Activated CD4-positive, alpha-beta T cell treated with anti-CD3 and anti-CD28 coated beads for 36 hours (primary cell): ENCODE measurements at regions of chr2 and their contacts with region 1.

Region 1: GRCh38 chr2:11129598-11130449 is 25.4 kb upstream of the SLC66A3 start:
- DNase-seq: peak; percentile 90
- ATAC-seq: peak; percentile 92
- H3K4me3 Mint-ChIP-seq: peak overlapping the region; percentile 52
- H3K27ac Mint-ChIP-seq: peak overlapping the region; percentile 51
- H3K4me1 Mint-ChIP-seq: peaks cover 28% of the 10 kb centered on the region
- H3K27me3 Mint-ChIP-seq: no peaks in the 10 kb centered on the region

Region 2: GRCh38 chr2:10668402-10669012 is 461.3 kb before region 1 on chr2:
- CTCF ChIA-PET with region 1: no interaction called
- POLR2A ChIA-PET with region 1: no interaction called
- intact Hi-C with region 1: no loop called
- DNase-seq: peak; percentile 23
- ATAC-seq: peak; percentile 70
- H3K4me3 Mint-ChIP-seq: no peak overlapping the region
- H3K27ac Mint-ChIP-seq: no peak overlapping the region
- H3K4me1 Mint-ChIP-seq: no peaks in the 10 kb centered on the region
- H3K27me3 Mint-ChIP-seq: no peaks in the 10 kb centered on the region

Region 3: GRCh38 chr2:10812362-10813162 is 317.3 kb before region 1 on chr2 and contains the start of gene PDIA6:
- CTCF ChIA-PET with region 1: interaction called, 4 read pairs
- POLR2A ChIA-PET with region 1: interaction called, 4 read pairs
- intact Hi-C with region 1: loop called in 1 of 2 experiments (anchors 1 kb)
- DNase-seq: peak; percentile 97
- ATAC-seq: peak; percentile 94
- H3K4me3 Mint-ChIP-seq: peak within 1 kb of the TSS; percentile 89
- H3K27ac Mint-ChIP-seq: peak within 1 kb of the TSS; percentile 90
- H3K4me1 Mint-ChIP-seq: peaks cover 34% of the 10 kb centered on the region
- H3K27me3 Mint-ChIP-seq: peaks cover 1% of the 10 kb centered on the region
- total RNA-seq, gene PDIA6: 123 to 157 TPM

Region 4: GRCh38 chr2:11145350-11145749 is 15.5 kb after region 1 on chr2:
- CTCF ChIA-PET with region 1: interaction called, 12 read pairs
- POLR2A ChIA-PET with region 1: no interaction called
- intact Hi-C with region 1: no loop called
- DNase-seq: no peak
- ATAC-seq: no peak
- H3K4me3 Mint-ChIP-seq: no peak overlapping the region
- H3K27ac Mint-ChIP-seq: no peak overlapping the region
- H3K4me1 Mint-ChIP-seq: no peaks in the 10 kb centered on the region
- H3K27me3 Mint-ChIP-seq: peaks cover 2% of the 10 kb centered on the region

Region 5: GRCh38 chr2:11344342-11344955 is 214.6 kb after region 1 on chr2 and contains the start of gene ROCK2:
- CTCF ChIA-PET with region 1: interaction called, 11 read pairs
- POLR2A ChIA-PET with region 1: no interaction called
- intact Hi-C with region 1: loop called in 1 of 2 experiments (anchors 2 kb)
- DNase-seq: peak; percentile 81
- ATAC-seq: peak; percentile 68
- H3K4me3 Mint-ChIP-seq: peak within 1 kb of the TSS; percentile 97
- H3K27ac Mint-ChIP-seq: peak within 1 kb of the TSS; percentile 89
- H3K4me1 Mint-ChIP-seq: peaks cover 31% of the 10 kb centered on the region
- H3K27me3 Mint-ChIP-seq: no peaks in the 10 kb centered on the region
- total RNA-seq, gene ROCK2: 14.4 to 16.7 TPM

Region 6: GRCh38 chr2:11446733-11447248 is 317.0 kb after region 1 on chr2:
- CTCF ChIA-PET with region 1: interaction called, 28 read pairs
- POLR2A ChIA-PET with region 1: interaction called, 3 read pairs
- intact Hi-C with region 1: loop called (anchors 1 kb)
- DNase-seq: peak; percentile 62
- ATAC-seq: peak; percentile 66
- H3K4me3 Mint-ChIP-seq: no peak overlapping the region
- H3K27ac Mint-ChIP-seq: no peak overlapping the region
- H3K4me1 Mint-ChIP-seq: no peaks in the 10 kb centered on the region
- H3K27me3 Mint-ChIP-seq: no peaks in the 10 kb centered on the region

Region 7: DNA sequence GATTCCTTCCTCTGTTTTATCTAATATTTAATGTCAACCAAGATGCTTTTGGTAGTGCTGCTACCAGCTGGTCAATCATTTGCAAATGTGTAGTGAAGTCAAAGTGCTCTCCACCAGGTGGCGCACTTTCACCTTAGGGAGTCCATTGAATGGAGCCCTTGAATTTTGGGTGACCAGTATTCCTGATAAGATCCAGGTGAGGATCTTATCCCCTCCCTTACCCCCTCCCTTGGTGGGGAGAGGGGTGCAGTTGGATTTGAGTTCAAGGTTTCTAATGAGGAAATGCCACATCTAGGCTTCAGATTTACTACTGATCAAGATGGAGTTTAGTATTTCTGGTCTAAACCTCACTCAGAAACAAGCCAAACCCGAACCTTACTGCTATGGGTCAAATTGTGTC is 348.2 kb after region 1 on chr2:
- CTCF ChIA-PET with region 1: interaction called, 11 read pairs
- POLR2A ChIA-PET with region 1: no interaction called
- intact Hi-C with region 1: no loop called
- DNase-seq: peak; percentile 93
- ATAC-seq: peak; percentile 68
- H3K4me3 Mint-ChIP-seq: no peak overlapping the region
- H3K27ac Mint-ChIP-seq: no peak overlapping the region
- H3K4me1 Mint-ChIP-seq: peaks cover under 1% of the 10 kb centered on the region
- H3K27me3 Mint-ChIP-seq: peaks cover 27% of the 10 kb centered on the region

Region 8: GRCh38 chr2:11681722-11682589 is 552.1 kb after region 1 on chr2:
- CTCF ChIA-PET with region 1: interaction called, 5 read pairs
- POLR2A ChIA-PET with region 1: no interaction called
- intact Hi-C with region 1: loop called in 1 of 2 experiments (anchors 2 kb)
- DNase-seq: peak; percentile 80
- ATAC-seq: peak; percentile 91
- H3K4me3 Mint-ChIP-seq: no peak overlapping the region
- H3K27ac Mint-ChIP-seq: no peak overlapping the region
- H3K4me1 Mint-ChIP-seq: peaks cover 4% of the 10 kb centered on the region
- H3K27me3 Mint-ChIP-seq: peaks cover 10% of the 10 kb centered on the region